ENCODE measurements at regions of chr2 and their contacts with region 1.

Region 1: DNA sequence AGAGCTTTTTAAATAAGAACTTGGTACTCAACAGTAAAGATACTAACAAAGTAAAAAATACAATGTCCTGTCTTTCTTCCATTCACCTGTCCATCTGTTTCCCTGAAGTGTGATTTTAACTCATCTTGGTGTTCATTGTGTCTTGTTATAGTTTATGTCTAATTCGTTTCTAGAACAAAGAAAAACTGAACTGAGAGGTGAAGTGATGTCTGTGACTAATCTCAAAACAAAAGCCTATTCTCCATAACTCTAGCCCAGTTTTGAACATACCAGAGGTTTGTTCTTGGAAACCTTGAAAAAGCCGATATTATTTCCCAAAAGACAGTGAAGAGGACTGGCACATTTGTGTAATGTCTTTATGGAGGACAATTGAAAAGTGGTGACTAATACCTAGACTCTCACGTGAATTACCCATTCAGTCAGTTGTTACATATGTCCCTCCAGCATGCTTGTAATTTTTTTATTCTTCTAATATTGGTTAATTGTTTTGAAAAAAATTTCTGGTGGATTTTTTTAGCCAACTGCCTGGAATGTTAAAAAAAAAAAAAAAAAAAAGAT is 725.8 kb downstream of the SATB2 start:
- DNase-seq: no peak
- H3K4me3 ChIP-seq: no peak overlapping the region
- H3K27ac ChIP-seq: no peak overlapping the region
- H3K4me1 ChIP-seq: no peaks in the 10 kb centered on the region
- H3K27me3 ChIP-seq: no peaks in the 10 kb centered on the region
- CTCF ChIP-seq: no peak
- POLR2A ChIP-seq: no peak

Region 2: DNA sequence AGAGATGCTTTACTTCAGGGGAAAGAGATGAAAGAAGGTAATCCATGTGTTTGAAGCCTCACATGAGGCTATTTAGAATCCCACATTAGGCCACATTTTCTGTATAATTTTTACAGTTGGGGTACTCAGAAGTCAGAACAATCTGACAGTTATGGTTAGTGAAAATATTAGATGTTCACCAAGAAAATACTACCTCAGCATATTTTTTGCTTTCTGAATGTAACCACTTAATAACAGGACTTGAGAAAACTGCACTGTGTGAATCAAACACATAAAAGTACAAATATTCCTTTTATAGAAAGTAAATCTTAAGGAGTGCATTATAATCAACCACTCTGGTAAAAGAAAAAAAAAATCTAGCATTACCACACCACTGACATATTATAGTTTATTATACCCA is 556.5 kb after region 1 on chr2:
- intact Hi-C with region 1: no loop called
- DNase-seq: no peak
- H3K4me3 ChIP-seq: no peak overlapping the region
- H3K27ac ChIP-seq: no peak overlapping the region
- H3K4me1 ChIP-seq: no peaks in the 10 kb centered on the region
- H3K27me3 ChIP-seq: no peaks in the 10 kb centered on the region
- CTCF ChIP-seq: no peak
- POLR2A ChIP-seq: no peak

Region 3: DNA sequence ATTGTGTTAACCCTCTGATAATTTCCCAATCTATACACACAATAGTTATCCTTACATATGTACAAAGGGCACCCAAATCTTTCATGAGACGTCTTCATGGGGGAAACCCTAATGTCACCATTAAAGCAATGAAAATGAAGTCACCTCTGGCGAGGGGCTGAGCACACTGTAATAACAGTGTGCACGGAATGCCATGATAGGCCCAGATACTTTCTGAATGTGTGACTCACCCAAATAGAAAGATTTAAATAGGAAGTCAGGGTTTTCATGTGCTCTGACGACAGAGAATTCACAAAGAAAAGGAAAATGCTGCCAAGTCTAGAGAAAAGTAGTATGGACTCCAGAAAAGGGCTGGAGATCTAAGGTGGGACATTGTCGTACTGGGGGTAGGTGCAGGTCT is 597.5 kb after region 1 on chr2:
- intact Hi-C with region 1: loop called (anchors 5 kb)
- DNase-seq: no peak
- H3K4me3 ChIP-seq: no peak overlapping the region
- H3K27ac ChIP-seq: no peak overlapping the region
- H3K4me1 ChIP-seq: no peaks in the 10 kb centered on the region
- H3K27me3 ChIP-seq: no peaks in the 10 kb centered on the region
- CTCF ChIP-seq: no peak
- POLR2A ChIP-seq: no peak

Measured in breast epithelium (tissue), 4 donors.